Aorta (tissue), 5 donors: ENCODE measurements at regions of chr16 and their contacts with region 1.

Region 1: GRCh38 chr16:21708533-21709115 is 44.9 kb downstream of the OTOA start:
- DNase-seq: peak; percentile 73 to 79
- ATAC-seq: peak; percentile 59
- H3K4me3 ChIP-seq: no peak overlapping the region
- H3K27ac ChIP-seq: no peak overlapping the region
- H3K4me1 ChIP-seq: no peaks in the 10 kb centered on the region
- H3K27me3 ChIP-seq: no peaks in the 10 kb centered on the region

Region 2: GRCh38 chr16:21523411-21524067 is 185.1 kb before region 1 on chr16:
- intact Hi-C with region 1: no loop called
- DNase-seq: no peak
- ATAC-seq: no peak
- H3K4me3 ChIP-seq: no peak overlapping the region
- H3K27ac ChIP-seq: no peak overlapping the region
- H3K4me1 ChIP-seq: no peaks in the 10 kb centered on the region
- H3K27me3 ChIP-seq: no peaks in the 10 kb centered on the region

Region 3: DNA sequence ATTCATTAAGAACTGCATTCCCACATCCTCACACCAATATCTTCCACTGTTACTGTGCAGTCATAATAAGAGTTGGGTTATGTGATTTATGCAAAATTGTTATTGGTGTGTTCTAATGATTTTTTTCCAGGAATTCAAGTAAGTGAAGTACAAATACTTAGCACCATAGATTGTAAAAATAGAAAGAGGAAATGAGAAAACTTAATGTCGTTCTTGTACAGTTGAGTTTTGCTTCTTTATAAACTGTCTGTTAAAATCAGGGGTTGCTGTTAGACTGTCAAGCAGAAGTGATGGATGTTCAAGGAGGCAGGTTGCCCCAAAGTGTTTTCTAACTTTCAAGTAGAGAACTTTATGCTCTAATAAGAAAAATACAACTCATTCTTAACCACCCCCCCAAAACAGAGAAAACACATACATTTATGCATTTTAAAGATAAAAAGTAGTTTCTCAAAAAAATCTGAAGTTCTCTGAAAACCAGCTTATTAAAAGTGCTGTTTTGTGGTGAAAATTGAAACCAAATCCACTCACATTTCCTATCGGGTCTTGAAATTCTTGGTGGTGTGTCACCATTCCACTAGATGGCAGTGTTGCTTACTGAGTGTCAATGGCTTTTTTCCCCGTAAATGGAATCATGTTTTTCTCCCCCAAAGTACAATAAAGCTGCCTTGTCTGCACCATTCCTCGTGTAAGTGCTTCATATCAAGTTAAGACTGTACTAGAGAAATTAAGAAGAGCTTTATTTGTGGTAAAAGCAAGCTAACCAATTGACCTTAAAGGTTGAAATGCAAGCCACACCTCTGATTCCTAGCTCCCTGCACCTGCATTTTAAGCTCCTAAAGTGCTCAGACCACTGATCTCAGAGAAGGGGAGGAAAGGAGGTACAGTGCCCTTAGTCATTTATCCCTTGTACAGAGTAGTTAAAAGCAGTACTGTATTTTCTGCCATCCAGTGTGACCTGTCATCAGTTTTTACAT is 51.5 kb before region 1 on chr16:
- intact Hi-C with region 1: loop called (anchors 5 to 10 kb)
- DNase-seq: no peak
- ATAC-seq: no peak
- H3K4me3 ChIP-seq: no peak overlapping the region
- H3K27ac ChIP-seq: no peak overlapping the region
- H3K4me1 ChIP-seq: no peaks in the 10 kb centered on the region
- H3K27me3 ChIP-seq: no peaks in the 10 kb centered on the region

Region 4: DNA sequence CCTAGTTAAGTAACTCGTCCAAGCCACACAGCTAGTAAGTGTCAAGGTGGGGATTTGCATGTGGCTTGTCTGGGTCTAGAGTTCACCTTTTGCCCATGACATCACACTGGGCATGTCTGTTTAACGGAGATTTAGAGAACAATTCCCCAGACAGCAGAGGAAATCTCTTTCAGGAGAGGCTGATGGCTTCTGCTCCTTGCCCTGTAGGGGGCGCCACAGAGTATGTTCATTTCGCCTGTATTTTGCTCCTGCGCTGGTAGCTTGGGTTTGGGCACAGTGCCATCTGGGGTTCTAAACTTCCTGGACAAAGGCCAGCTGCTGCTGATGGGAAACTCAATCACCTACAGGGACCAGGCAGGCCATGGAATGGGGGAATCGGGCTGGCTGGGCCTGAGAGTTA is 24.4 kb before region 1 on chr16:
- intact Hi-C with region 1: no loop called
- DNase-seq: no peak
- ATAC-seq: no peak
- H3K4me3 ChIP-seq: no peak overlapping the region
- H3K27ac ChIP-seq: no peak overlapping the region
- H3K4me1 ChIP-seq: no peaks in the 10 kb centered on the region
- H3K27me3 ChIP-seq: no peaks in the 10 kb centered on the region

Region 5: DNA sequence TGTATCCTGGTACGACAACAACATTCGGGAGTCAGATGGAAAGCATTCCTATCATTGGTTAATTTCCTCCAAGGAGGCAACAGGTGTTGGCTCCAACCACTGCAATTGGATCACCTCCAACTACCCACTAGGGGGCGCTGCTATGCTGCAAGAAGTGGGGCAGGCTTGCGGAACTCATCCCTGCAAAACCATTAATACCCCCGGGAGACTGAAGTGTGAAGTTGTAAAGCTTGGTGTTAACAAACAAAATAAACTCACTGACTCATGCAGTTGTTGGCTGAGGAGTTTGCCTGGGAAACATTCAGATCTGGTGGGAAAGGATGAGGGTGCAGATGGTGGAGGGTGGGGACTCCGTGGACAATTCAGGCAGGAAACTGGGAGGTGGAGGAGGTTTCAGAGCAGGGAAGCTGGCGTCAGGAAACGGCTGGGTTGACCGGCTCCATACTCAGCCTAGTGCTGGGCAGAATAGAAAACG is 1190.3 kb after region 1 on chr16:
- intact Hi-C with region 1: no loop called
- DNase-seq: peak; percentile 78 to 83
- ATAC-seq: peak; percentile 64
- H3K4me3 ChIP-seq: no peak overlapping the region
- H3K27ac ChIP-seq: no peak overlapping the region
- H3K4me1 ChIP-seq: no peaks in the 10 kb centered on the region
- H3K27me3 ChIP-seq: no peaks in the 10 kb centered on the region